WTC11 (cell line): ENCODE measurements at regions of chr2 and their contacts with region 1.

Region 1: GRCh38 chr2:72150157-72150865 is 2.6 kb upstream of the CYP26B1 start:
- DNase-seq: peak; percentile 85
- ATAC-seq: peak; percentile 56
- H3K4me3 Mint-ChIP-seq: peak overlapping the region; percentile 79
- H3K27ac Mint-ChIP-seq: no peak overlapping the region
- H3K4me1 Mint-ChIP-seq: peaks cover 31% of the 10 kb centered on the region
- H3K27me3 Mint-ChIP-seq: peaks cover 78% of the 10 kb centered on the region
- CTCF ChIP-seq: peak; percentile 83

Region 2: GRCh38 chr2:71923887-71924533 is 226.3 kb before region 1 on chr2:
- CTCF ChIA-PET with region 1: interaction called, 68 read pairs
- POLR2A ChIA-PET with region 1: no interaction called
- DNase-seq: peak; percentile 86
- ATAC-seq: peak; percentile 99
- H3K4me3 Mint-ChIP-seq: no peak overlapping the region
- H3K27ac Mint-ChIP-seq: no peak overlapping the region
- H3K4me1 Mint-ChIP-seq: no peaks in the 10 kb centered on the region
- H3K27me3 Mint-ChIP-seq: no peaks in the 10 kb centered on the region
- CTCF ChIP-seq: peak; percentile 89

Region 3: DNA sequence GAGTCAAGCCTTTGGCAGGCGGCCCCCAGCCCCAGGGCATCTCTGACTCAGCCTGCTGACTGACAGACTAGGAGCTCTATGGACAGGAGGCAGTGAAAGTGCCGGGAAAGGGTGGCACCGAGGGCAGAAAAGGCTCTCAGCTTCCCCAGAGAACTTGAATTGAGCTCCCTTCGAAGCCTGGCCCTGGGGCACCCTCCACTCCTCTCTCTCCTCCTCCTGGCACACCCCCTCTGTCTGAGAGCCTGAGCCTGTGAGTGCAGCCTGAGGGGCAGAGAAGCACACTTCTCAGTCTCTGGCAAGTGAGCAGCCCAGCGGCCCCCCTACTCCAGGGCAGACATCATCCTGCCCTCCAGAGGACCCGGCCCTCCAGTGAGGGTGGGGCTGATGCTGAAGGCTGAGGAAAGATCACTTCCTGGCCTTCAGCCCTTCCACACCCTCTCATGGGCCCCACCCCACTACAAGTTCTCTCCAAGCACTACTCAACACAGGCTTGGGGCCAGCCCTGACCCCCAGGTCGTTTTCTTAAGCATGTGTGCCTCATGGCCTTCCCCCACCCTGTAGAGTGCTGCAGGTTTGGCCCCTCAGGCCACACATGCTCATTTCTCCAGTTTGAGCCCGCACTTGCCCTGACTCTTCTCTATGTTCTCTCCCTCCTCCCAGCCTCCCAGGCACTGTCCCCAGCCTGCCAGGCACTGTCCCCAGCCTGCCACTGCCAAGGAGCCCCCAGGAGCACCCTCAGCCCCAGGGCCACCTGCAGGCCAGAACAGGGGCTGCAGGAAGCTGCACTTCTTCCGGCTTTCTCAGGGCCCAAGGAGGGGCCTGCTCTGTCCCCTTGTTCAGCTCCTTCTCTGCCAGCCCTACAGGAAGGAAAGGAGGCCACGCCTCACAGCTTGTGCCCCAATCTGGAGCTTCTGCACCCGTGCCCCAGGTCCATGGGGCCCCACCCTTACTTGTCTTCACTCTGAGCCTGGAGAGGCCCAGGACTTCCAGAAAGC is 34.5 kb before region 1 on chr2:
- CTCF ChIA-PET with region 1: interaction called, 16 read pairs
- POLR2A ChIA-PET with region 1: no interaction called
- DNase-seq: peak; percentile 64
- ATAC-seq: peak; percentile 97
- H3K4me3 Mint-ChIP-seq: no peak overlapping the region
- H3K27ac Mint-ChIP-seq: no peak overlapping the region
- H3K4me1 Mint-ChIP-seq: peaks cover 3% of the 10 kb centered on the region; the same call in 1 of the 2 replicates
- H3K27me3 Mint-ChIP-seq: peaks cover 6% of the 10 kb centered on the region
- CTCF ChIP-seq: peak; percentile 57; the same call in 1 of the 2 replicates

Region 4: DNA sequence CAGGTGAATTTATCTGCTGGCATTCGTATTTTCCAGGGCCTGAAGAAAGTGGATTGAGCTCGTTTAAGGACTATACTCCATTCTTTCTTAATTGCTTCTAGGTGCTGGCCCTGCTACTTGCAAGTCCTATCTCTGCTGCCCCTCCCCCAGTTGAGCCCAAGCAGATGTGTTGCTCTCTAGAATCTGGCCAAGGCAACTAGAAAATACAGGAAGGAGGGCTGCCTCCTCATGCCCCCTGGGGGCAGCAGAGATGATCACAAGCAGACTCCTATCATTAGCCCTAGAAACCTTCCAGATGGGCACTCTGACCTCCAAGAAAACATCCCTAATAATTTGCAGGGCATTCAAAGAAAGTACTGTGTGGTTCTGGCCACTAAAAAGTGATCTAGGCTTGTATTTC is 69.9 kb after region 1 on chr2:
- CTCF ChIA-PET with region 1: interaction called, 10 read pairs
- POLR2A ChIA-PET with region 1: no interaction called
- DNase-seq: peak; percentile 76
- ATAC-seq: peak; percentile 99
- H3K4me3 Mint-ChIP-seq: no peak overlapping the region
- H3K27ac Mint-ChIP-seq: no peak overlapping the region
- H3K4me1 Mint-ChIP-seq: peaks cover 14% of the 10 kb centered on the region
- H3K27me3 Mint-ChIP-seq: no peaks in the 10 kb centered on the region
- CTCF ChIP-seq: 0 out of 2 replicates have a peak, but pooled peaks have one; percentile 26

Region 5: GRCh38 chr2:72579591-72580180 is 429.4 kb after region 1 on chr2:
- CTCF ChIA-PET with region 1: interaction called, 13 read pairs
- POLR2A ChIA-PET with region 1: no interaction called
- DNase-seq: no peak
- ATAC-seq: no peak
- H3K4me3 Mint-ChIP-seq: no peak overlapping the region
- H3K27ac Mint-ChIP-seq: no peak overlapping the region
- H3K4me1 Mint-ChIP-seq: 0 out of 2 replicates have a peak, but pooled peaks cover 2% of the 10 kb centered on the region
- H3K27me3 Mint-ChIP-seq: no peaks in the 10 kb centered on the region
- CTCF ChIP-seq: peak; percentile 46